ENCODE measurements at regions of chr1 and their contacts with region 1.

Region 1: GRCh38 chr1:202009326-202010179 is 834 bp upstream of the ELF3 start:
- DNase-seq: peak; percentile 49 to 95 (median 85)

Region 2: GRCh38 chr1:202117865-202118371 is 108.4 kb after region 1 on chr1:
- intact Hi-C with region 1: loop called (anchors 5 kb)
- DNase-seq: no peak

Region 3: GRCh38 chr1:202135221-202135721 is 125.7 kb after region 1 on chr1:
- intact Hi-C with region 1: loop called (anchors 5 kb)
- DNase-seq: peak in 41 of 42 donors; percentile 62 to 90 (median 78)